ENCODE measurements at regions of chr14 and their contacts with region 1.

Region 1: DNA sequence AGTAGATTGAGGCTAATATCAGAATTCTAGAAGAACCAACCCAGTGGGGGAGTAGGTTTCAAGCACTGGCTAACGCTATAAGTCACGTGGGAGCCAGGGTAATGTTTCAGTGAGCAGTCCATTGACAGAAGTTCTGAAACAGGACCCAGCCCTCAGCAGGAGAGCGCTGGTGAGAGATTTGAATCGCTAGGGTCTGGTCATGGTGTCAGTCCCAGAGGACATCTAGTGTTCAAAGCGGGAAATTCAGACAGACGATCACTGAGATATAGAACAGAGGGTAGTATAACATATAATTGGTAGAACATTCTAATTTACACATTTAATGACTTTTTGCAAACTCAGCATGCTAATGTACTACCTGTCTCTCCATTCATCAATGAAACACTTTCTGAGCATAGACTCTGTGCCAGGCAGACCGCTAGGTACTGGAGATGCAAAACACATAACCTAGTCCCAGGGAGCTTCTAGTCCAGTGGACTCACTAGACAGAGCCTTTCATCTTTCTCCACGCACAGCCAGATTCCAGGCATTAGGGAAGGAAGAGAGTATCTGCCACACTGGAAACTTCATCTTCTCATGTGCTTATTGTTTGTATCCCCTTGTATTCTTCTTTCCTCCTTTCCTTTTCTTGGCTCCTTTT is 35.4 kb upstream of the RNASE3 start:
- DNase-seq: peak; percentile 58 to 63
- H3K4me3 ChIP-seq: no peak overlapping the region
- H3K27ac ChIP-seq: no peak overlapping the region
- H3K4me1 ChIP-seq: no peaks in the 10 kb centered on the region
- H3K27me3 ChIP-seq: no peaks in the 10 kb centered on the region
- CTCF ChIP-seq: peak; percentile 51 to 87 (median 64)
- POLR2A ChIP-seq: no peak

Region 2: GRCh38 chr14:20699931-20700330 is 155.8 kb before region 1 on chr14:
- intact Hi-C with region 1: loop called (anchors 5 kb)
- DNase-seq: no peak
- H3K4me3 ChIP-seq: no peak overlapping the region
- H3K27ac ChIP-seq: no peak overlapping the region
- H3K4me1 ChIP-seq: no peaks in the 10 kb centered on the region
- H3K27me3 ChIP-seq: no peaks in the 10 kb centered on the region
- CTCF ChIP-seq: no peak
- POLR2A ChIP-seq: no peak

Region 3: DNA sequence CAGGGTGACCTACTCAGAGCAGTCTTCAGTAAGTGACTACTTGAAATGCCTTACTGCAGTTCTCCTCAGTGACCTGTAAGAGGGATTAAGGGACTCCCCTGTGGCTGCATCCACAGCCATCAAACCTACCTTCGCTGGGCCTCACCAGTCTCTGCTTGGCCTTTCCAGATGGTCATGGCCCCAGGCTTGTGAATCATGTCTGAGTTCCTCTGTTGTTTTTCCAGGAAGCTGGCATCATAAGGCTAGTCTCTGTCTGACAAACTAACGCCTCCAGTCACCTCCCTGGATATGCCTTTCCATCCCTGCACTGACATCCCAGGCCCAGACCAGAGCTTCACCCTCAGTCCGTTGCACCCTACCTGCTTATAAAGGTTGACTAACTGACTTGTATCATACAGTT is 113.6 kb after region 1 on chr14:
- intact Hi-C with region 1: loop called (anchors 10 kb)
- DNase-seq: no peak
- H3K4me3 ChIP-seq: no peak overlapping the region
- H3K27ac ChIP-seq: no peak overlapping the region
- H3K4me1 ChIP-seq: peaks cover 0 to 4% of the 10 kb centered on the region in 2 donors
- H3K27me3 ChIP-seq: no peaks in the 10 kb centered on the region
- CTCF ChIP-seq: no peak
- POLR2A ChIP-seq: no peak